AG04449 (cell line): ENCODE measurements at regions of chr15 and their contacts with region 1.

Region 1: GRCh38 chr15:65286704-65287519 is at the start of gene PARP16:
- DNase-seq: no peak
- H3K4me3 ChIP-seq: peak within 1 kb of the TSS; percentile 69
- CTCF ChIP-seq: peak; percentile 49

Region 2: DNA sequence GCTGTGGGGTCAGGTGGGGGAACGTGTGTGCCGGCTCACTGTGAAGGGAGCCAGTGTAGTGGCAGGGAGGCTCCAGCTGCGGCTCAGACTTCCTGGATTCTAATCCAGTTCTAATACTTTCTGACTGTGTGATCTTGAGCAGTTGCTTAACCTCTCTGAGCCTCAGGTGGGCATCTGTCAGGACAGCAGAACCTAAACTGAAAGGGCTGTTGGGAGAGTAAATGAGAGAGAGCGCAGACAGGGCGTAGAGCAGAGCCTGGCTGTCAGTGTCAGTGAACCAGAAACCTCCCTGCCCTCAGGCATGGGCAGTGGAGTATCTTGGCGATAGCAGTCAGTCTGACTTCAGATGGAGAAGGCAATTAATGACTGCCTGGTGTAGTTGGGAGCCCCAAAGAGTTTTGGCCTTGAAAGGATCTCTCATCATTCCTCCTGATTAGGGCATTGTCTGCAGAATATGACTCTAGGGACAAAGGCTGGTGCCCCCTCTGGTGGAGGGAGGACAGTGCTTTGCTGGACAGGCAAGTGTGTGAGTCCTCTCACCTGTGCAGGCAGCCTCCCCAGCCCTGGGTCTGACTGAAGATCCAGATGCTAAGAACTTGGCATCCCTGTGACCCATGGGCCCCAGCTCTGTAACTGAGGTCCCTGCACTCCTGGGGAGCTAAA is 200.8 kb before region 1 on chr15:
- CTCF ChIA-PET with region 1: no interaction called
- POLR2A ChIA-PET with region 1: no interaction called
- DNase-seq: no peak
- H3K4me3 ChIP-seq: no peak overlapping the region
- CTCF ChIP-seq: peak; percentile 55

Region 3: DNA sequence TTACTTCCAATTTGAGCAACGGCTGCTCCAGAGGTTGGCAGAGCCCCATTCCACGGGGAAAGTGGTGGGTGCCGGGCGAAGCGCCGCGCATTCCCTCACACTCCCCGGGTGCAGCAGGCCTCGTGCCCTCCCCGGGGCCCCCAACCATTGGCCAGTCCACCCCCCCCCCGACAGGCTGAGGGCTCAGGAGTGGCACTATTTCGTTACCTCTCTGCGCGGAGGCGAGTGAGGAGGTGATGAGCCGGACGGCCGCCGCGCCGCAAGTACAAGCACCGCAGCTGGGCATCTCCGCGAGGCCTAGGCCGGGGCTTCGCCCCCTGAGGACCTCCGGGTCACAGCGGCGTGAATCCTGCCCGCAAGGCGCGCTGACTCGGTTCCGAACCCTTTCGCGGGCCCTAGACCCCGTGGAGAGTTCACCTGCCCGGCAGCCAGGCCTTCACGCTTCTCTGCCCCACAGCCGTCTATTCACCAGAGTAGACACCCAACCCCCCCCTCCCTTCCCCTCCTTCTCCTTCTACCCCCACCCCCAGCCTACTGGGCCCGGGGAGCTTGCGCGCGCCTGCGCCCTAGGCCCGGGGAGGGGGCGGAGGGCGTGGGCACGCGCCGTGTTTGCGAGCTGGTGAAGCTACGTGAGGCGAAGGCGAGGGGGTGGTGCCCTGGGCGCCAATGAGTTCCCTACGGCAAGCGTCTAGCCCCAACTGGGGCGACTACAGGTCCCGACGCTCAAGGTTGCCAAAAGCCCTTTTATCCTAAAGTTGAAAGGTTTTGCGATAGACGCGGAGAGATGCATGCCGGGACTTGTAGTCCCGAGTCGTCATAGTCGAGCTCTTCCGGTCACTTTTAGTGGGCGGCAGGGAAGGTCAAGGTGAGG is 101.8 kb before region 1 on chr15 and contains the start of gene CLPX:
- CTCF ChIA-PET with region 1: interaction called, 21 read pairs
- POLR2A ChIA-PET with region 1: interaction called, 6 read pairs
- DNase-seq: peak; percentile 41
- H3K4me3 ChIP-seq: peak within 1 kb of the TSS; percentile 91
- CTCF ChIP-seq: no peak

Region 4: GRCh38 chr15:65201905-65202304 is 85.0 kb before region 1 on chr15:
- CTCF ChIA-PET with region 1: interaction called, 12 read pairs
- POLR2A ChIA-PET with region 1: no interaction called
- DNase-seq: no peak
- H3K4me3 ChIP-seq: no peak overlapping the region
- CTCF ChIP-seq: no peak

Region 5: GRCh38 chr15:65264863-65265430 is 22.0 kb before region 1 on chr15:
- CTCF ChIA-PET with region 1: interaction called, 97 read pairs
- POLR2A ChIA-PET with region 1: no interaction called
- DNase-seq: no peak
- H3K4me3 ChIP-seq: no peak overlapping the region
- CTCF ChIP-seq: no peak

Region 6: GRCh38 chr15:65304389-65305144 is 17.7 kb after region 1 on chr15 and contains the start of gene RNU5B-1:
- CTCF ChIA-PET with region 1: interaction called, 4 read pairs
- POLR2A ChIA-PET with region 1: interaction called, 42 read pairs
- DNase-seq: peak; percentile 96
- H3K4me3 ChIP-seq: peak within 1 kb of the TSS; percentile 56
- CTCF ChIP-seq: peak; percentile 85

Region 7: DNA sequence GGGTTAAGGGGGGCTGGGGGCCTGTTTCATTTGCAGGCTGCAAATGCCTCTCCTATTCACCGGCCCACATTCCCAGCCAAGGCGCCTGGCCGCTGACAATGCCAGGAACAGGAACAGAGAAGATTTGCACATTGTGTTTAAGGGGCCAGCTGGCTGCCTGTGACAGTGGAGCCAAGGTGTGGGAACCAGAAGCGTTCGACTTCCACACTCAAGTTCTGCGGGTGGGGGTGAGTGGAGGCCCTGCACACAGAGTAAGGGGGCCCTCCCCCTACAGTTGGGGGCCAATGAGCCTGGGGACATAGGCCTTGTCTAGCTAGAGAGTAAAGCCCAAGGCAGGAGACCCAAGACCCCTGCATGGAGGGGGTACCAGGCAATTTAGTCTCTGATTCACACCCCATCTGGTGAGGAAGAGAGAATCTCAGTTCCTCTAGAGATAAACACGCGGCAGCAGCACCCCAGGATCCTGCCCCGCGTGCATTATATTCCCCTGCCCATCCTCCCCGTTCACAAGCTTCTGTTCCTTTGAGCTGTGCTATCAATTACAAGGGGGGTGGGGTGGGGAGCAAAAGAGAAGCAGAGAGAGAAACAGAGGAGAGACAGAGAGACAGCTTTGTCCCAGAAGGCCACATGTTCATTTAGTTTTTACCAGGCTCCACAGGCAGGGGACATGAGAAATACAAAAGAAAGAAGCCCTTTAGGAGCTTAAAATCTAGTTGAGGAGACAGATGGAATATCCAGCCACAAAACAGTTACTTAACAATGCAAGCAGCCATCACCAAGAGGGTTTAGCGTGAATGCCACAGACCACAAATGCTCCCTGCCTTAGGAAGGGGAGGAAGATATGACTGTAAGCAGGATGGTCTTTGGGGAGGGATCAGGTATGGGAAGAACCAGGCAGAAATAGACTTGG is 81.6 kb after region 1 on chr15:
- CTCF ChIA-PET with region 1: no interaction called
- POLR2A ChIA-PET with region 1: no interaction called
- DNase-seq: no peak
- H3K4me3 ChIP-seq: no peak overlapping the region
- CTCF ChIP-seq: no peak